Tibial artery (tissue), 4 donors: ENCODE measurements at regions of chr2 and their contacts with region 1.

Region 1: DNA sequence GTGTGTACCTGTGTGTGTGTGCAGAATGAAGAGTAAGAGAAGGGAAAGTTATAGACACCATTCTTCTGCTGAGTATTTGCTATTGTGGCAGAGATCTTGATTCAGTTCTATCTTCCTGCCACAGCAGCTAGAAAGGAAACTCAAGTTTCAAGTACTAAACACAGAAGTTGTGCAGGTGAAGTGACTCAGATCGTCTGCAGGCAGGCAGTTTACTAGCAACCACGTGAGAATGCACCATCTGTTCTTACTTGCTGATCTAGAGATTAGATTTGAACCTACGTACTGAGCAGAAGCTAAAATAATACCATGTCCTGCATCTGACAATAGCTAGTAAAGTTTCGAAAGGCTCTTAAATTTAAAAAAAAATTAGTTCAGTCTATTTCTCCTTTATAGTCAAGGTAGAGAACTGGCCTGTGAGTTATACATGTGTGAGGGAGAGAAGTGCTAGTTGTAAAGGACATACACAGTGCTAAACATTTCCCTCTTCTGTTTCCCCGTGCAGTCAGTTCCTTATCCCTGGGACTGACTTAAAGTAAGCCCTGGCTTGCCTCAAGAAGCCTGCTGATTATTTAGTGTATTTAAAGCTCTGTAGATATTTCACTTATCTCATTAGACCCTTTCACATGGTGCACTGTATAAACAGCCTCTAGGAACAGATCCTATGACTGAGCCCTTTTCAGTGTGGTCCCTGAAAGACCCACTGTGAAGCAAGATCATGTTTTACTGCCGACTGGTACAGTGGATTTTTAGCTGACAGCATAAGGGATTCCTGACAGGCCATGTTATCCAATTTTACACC is 45.0 kb downstream of the SLC38A11 start:
- DNase-seq: no peak
- H3K4me3 ChIP-seq: no peak overlapping the region
- H3K27ac ChIP-seq: peak overlapping the region; percentile 28 to 60
- H3K4me1 ChIP-seq: peaks cover 0 to 27% (median 6%) of the 10 kb centered on the region in 4 donors
- H3K27me3 ChIP-seq: no peaks in the 10 kb centered on the region
- CTCF ChIP-seq: no peak

Region 2: DNA sequence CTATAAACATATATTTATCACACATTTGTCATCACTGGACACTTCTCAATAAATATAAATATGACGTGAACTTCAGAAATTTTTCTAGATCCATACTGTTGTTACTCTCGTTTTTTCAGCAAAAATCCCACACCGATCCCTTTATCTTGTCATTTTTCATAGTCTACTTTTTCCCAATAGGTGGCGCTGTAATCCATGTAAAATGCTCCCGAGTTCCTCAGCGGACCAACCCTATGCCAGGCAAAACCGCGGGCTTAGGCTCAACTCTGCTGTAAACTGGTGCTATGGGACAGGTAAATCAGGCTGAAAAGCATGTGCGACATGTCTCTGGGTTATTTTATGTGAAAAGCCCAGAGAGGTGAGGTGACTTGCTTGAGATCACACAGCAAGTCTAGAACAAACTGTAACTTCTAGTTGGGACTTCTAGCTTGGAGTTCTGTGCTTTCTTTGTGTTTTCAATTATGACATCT is 172.7 kb before region 1 on chr2:
- intact Hi-C with region 1: loop called (anchors 5 kb)
- DNase-seq: peak in 1 of 2 donors; percentile 54
- H3K4me3 ChIP-seq: no peak overlapping the region
- H3K27ac ChIP-seq: peak overlapping the region; percentile 32 to 36
- H3K4me1 ChIP-seq: peaks cover 0 to 58% (median 17%) of the 10 kb centered on the region in 4 donors
- H3K27me3 ChIP-seq: no peaks in the 10 kb centered on the region
- CTCF ChIP-seq: peak; percentile 64 to 80